GM13977 (cell line): ENCODE measurements at regions of chr9 and their contacts with region 1.

Region 1: GRCh38 chr9:132228062-132228461 is 66.2 kb downstream of the NTNG2 start:
- DNase-seq: no peak
- CTCF ChIP-seq: no peak

Region 2: GRCh38 chr9:131627648-131628458 is 600.2 kb before region 1 on chr9:
- in situ Hi-C with region 1: no loop called
- DNase-seq: no peak
- CTCF ChIP-seq: no peak

Region 3: GRCh38 chr9:132169672-132170392 is 58.2 kb before region 1 on chr9:
- in situ Hi-C with region 1: loop called (anchors 10 kb)
- DNase-seq: peak; percentile 75
- CTCF ChIP-seq: peak; percentile 89

Region 4: GRCh38 chr9:132597073-132597775 is 369.2 kb after region 1 on chr9:
- in situ Hi-C with region 1: no loop called
- DNase-seq: no peak
- CTCF ChIP-seq: no peak